A549 (cell line): ENCODE measurements at regions of chr9 and their contacts with region 1.

Region 1: DNA sequence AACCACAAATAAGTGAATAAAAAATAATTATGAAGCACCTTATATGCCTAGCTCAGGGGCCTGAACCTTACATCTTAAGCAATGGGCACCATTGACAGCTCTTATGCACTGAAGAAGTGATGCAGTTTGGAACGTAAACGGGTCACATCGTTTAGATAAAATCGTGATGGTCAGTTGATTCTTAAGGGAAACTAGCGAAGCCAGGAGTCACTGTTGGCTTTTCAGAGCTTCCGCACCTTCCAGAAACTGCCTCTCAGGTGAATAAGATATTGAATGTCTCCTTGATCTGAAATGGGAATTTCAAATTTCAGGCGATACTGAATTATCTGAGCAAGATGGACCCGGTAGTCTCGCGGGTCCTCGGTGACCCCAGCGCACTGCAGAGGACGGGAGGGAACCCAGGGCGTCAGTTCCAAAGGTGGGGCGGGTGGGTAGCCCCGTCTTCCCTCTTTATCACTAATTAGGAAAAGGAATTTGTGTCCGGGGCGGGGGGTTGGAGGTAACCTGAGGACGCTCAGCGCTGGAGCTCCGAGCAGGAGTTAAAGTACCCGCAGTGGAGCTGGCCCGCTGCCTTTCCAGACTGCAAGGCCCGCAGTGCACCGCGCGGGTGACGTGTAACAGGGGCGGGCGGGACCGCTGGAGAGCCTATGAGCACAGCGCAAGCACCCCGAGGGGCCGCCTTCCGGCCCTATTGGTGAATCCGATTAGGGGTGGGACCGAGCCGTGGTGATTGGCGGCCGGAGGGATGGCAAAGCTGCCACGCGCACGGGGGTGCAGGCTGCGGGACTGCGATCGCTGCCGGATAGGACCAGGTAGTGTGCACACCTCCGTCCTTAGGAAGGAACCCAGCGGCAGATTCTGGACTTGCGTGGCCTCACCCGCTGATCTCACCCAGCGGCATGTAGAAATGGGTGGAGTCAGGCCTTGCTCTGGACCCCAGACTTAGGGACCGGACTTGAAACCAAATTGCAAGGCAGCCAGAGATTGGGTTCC is 19.7 kb upstream of the GARNL3 start:
- DNase-seq: peak; percentile 93 to 98
- ATAC-seq: peak; percentile 100
- H3K4me3 ChIP-seq: peak overlapping the region; percentile 62
- H3K27ac ChIP-seq: peak overlapping the region; percentile 84 to 90
- H3K4me1 ChIP-seq: peaks cover 10% of the 10 kb centered on the region; the same call in 2 of the 3 replicates
- CTCF ChIP-seq: no peak
- EP300 ChIP-seq: no peak
- POLR2A ChIP-seq: peak; percentile 81
- RAD21 ChIP-seq: no peak

Region 2: DNA sequence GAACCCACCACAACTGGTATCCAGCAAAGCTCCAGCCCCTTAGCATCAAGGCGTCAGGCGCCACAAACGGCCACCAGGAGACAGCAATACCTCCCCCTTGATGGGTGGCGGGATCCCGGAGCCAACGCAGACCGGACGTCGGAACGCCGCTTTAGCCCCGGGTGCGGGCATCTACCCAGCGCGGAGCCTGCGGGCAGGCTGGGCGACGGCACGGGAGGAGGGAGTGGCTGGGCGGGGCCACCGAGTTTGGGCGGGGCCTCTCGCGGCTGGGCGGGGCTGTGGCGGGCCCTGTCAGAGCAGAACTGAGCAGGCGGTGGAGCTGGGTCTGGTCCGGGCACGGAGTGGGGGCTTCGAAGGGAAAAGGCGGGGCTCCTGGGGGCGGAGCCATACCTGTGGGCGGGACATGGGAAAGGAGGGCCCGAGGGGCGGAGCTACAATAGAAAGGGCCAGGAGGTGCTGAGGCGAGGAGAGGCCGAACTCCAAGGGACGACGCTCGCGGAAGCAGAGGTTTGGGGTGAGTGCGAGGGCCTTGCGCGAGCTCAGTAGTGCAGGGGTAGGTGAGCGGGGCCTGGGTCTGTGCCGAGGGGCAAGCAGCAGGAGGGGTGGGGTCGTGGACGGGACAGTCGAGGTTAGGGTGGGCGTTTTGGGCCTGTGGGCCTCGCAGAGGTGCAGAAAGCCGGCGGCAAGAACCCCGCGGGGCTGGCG is 20.6 kb before region 1 on chr9:
- CTCF ChIA-PET with region 1: interaction called, 5 read pairs
- POLR2A ChIA-PET with region 1: interaction called, 20 read pairs
- DNase-seq: peak; percentile 91 to 93
- ATAC-seq: peak; percentile 56 to 91
- H3K4me3 ChIP-seq: peak overlapping the region; percentile 93
- H3K27ac ChIP-seq: peak overlapping the region; percentile 74 to 91
- H3K4me1 ChIP-seq: peaks cover 12% of the 10 kb centered on the region; the same call in 2 of the 3 replicates
- CTCF ChIP-seq: no peak
- EP300 ChIP-seq: no peak
- POLR2A ChIP-seq: no peak; the same call in 1 of the 2 replicates
- RAD21 ChIP-seq: no peak